Gastrocnemius medialis (tissue), 4 donors: ENCODE measurements at regions of chr19 and their contacts with region 1.

Region 1: GRCh38 chr19:10653715-10654492 is at the start of gene ILF3:
- DNase-seq: peak; percentile 100
- ATAC-seq: peak; percentile 86 to 90
- H3K4me3 ChIP-seq: peak within 1 kb of the TSS; percentile 85 to 99 (median 97)
- H3K27ac ChIP-seq: peak within 1 kb of the TSS; percentile 99 to 100 (median 99)
- H3K4me1 ChIP-seq: peaks cover 31 to 45% of the 10 kb centered on the region in 2 donors
- H3K27me3 ChIP-seq: no peaks in the 10 kb centered on the region
- CTCF ChIP-seq: peak in 2 of 5 experiments; percentile 68 to 82
- POLR2A ChIP-seq: peak; percentile 85 to 91
- total RNA-seq, gene ILF3: 67.3 to 88.2 (median 76.6) TPM

Region 2: DNA sequence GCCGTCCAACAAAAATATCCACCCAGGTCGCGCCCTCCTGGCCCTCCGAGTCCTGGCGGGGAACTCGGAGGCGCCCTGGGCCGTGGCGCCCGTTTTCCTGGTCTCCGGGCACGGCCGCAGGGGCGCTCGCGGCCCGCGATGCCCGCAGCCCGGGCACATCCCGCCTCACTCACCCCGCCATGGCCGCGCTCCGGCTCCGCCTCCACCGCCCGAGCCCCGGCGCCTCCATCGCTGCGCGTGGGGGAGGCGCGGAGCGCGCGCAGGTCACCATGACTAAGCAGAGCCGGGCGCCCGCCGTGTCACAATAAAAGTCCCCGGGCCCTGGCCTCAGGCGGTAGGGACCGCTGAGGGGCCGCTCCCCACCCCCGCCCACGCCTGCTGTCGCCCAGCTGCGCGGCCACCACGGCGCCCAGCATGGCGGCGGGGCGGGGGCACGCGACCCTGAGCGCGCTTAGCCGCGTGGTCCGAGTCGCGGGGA is 151.3 kb before region 1 on chr19:
- in situ Hi-C with region 1: no loop called
- intact Hi-C with region 1: loop called (anchors 2 kb)
- DNase-seq: peak; percentile 89 to 94
- ATAC-seq: peak; percentile 79 to 89
- H3K4me3 ChIP-seq: peak overlapping the region; percentile 77 to 96 (median 92)
- H3K27ac ChIP-seq: peak overlapping the region; percentile 96 to 100 (median 98)
- H3K4me1 ChIP-seq: peaks cover 30 to 39% of the 10 kb centered on the region in 2 donors
- H3K27me3 ChIP-seq: no peaks in the 10 kb centered on the region
- CTCF ChIP-seq: peak in 2 of 5 experiments; percentile 25 to 41
- POLR2A ChIP-seq: peak; percentile 82 to 84

Region 3: DNA sequence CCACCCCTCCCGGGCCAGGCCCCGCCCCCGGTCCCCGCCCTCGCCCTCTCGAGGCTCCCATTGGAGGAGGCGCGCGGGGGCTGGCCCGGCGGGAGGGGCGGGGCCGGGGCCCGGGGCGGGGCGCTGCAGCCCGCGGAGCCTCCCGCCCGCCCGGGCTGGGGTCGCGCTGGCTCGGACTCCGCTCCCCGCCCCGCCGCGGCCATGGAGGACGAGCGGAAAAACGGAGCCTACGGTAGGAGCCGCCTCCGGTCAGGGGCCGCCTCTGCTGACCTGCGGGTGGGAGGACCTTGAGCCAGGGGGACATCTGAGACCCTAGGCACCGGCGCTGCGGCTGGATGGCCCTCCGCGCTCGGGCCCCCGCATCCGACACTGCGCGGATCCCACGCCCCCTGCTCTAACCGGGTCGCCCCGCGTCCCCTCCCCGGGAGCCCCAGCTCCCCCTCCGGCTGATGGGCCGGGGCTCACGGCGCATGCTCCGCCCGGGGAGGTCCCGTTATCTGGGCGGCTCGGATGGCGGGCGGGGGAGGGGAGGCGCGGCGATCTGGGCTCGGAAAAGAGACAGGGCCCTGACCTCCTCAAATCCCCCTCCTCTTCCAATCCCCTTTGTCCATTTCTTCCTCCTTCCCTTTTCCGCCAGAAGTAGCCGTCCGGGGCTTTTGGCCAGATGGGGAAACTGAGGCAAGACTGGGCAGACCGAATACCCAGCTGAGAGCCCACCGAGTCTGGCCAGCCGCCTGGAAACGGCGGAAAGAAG is 51.4 kb before region 1 on chr19:
- in situ Hi-C with region 1: no loop called
- intact Hi-C with region 1: loop called (anchors 2 kb)
- DNase-seq: peak; percentile 67 to 83
- ATAC-seq: peak; percentile 94 to 95
- H3K4me3 ChIP-seq: peak overlapping the region; percentile 93 to 100 (median 98)
- H3K27ac ChIP-seq: peak overlapping the region; percentile 86 to 98 (median 94)
- H3K4me1 ChIP-seq: peaks cover 15 to 18% of the 10 kb centered on the region in 2 donors
- H3K27me3 ChIP-seq: no peaks in the 10 kb centered on the region
- CTCF ChIP-seq: no peak
- POLR2A ChIP-seq: peak; percentile 60 to 62

Region 4: DNA sequence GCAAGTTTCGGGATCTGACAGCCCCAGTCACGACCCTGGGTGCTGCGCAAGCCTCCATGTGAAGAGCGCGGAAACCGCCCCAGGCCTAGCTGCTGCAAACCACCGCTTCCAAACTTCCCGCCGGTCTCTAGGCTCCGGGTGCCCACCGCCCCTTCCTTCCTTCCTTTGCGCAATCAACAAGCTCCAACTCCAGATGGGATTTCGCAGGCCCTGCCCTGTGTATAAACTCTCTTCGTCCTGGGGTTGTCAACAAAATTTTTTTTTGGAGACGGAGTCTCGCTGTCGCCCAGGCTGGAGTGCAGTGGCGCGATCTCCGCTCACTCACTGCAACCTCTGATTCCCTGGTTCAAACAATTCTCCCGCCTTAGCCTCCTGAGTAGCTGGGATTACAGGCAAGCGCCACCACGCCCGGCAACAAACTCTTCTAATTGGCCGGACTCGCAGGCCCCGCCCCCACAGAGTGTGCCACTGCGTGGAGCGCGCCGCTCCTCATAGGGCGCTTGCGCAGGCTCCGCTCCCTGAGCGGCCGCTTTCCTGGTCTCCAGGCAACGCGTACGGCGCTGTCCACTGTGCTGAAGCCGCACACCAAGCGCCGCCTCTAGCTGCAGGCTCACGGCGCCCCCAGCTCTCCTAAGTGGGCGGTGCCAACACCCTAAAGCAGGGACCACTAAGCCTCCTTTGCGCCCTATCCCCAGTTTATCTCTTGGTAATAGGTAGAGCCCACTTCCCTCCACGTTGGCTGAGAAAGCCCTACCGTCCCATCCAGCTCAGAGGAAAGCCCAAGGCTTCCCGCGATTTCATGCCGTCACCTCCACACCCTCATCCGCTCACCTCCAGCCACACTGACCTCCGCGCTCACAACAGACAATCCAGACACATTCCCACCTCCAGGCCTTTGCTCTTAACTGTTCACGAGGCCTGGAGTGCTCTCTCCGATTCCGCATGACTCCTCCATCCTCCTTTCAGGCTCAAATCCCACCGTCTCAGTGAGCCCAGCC is 41.8 kb after region 1 on chr19:
- in situ Hi-C with region 1: loop called in 1 of 4 experiments (anchors 5 kb)
- intact Hi-C with region 1: no loop called
- DNase-seq: peak; percentile 75 to 88
- ATAC-seq: peak; percentile 91 to 92
- H3K4me3 ChIP-seq: peak overlapping the region in 3 of 4 donors; percentile 20 to 38 (median 33)
- H3K27ac ChIP-seq: no peak overlapping the region
- H3K4me1 ChIP-seq: peaks cover 10 to 12% of the 10 kb centered on the region in 2 donors
- H3K27me3 ChIP-seq: no peaks in the 10 kb centered on the region
- CTCF ChIP-seq: no peak
- POLR2A ChIP-seq: no peak

Region 5: DNA sequence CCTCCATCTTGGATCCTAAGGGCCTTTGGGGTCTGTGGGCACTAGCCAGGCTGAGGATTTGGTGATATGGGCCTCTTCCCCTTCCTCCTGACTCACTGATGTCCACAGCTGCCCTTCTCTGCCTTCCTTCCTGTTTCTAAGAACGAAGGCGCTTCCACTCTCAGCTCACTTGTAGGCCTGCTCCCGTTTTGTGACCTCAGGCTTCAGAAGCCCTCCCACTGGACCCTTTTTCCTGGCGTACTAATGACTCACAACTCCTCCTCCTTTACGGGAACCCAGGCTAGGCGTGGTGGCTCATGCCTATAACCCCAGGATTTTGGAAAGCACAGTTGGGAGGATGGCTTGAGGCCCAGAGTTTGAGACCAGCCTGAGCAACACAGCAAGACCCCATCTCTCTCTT is 126.5 kb after region 1 on chr19:
- in situ Hi-C with region 1: no loop called
- intact Hi-C with region 1: no loop called
- DNase-seq: peak; percentile 29 to 56
- ATAC-seq: peak; percentile 74 to 76
- H3K4me3 ChIP-seq: no peak overlapping the region
- H3K27ac ChIP-seq: peak overlapping the region; percentile 54 to 72 (median 58)
- H3K4me1 ChIP-seq: peaks cover 4 to 7% of the 10 kb centered on the region in 2 donors
- H3K27me3 ChIP-seq: no peaks in the 10 kb centered on the region
- CTCF ChIP-seq: no peak
- POLR2A ChIP-seq: peak; percentile 9 to 33

Region 6: GRCh38 chr19:10899151-10899653 is 245.3 kb after region 1 on chr19:
- in situ Hi-C with region 1: no loop called
- intact Hi-C with region 1: no loop called
- DNase-seq: peak; percentile 68 to 92
- ATAC-seq: peak; percentile 50 to 74
- H3K4me3 ChIP-seq: no peak overlapping the region
- H3K27ac ChIP-seq: peak overlapping the region; percentile 84 to 95 (median 90)
- H3K4me1 ChIP-seq: peaks cover 71 to 74% of the 10 kb centered on the region in 2 donors
- H3K27me3 ChIP-seq: no peaks in the 10 kb centered on the region
- CTCF ChIP-seq: no peak
- POLR2A ChIP-seq: no peak

Region 7: GRCh38 chr19:10960314-10961072 is 306.6 kb after region 1 on chr19 and contains the start of gene SMARCA4:
- in situ Hi-C with region 1: no loop called
- intact Hi-C with region 1: loop called (anchors 1 kb)
- DNase-seq: peak; percentile 93 to 97
- ATAC-seq: peak; percentile 91 to 93
- H3K4me3 ChIP-seq: peak within 1 kb of the TSS; percentile 72 to 91 (median 86)
- H3K27ac ChIP-seq: peak within 1 kb of the TSS; percentile 88 to 99 (median 95)
- H3K4me1 ChIP-seq: peaks cover 23 to 24% of the 10 kb centered on the region in 2 donors
- H3K27me3 ChIP-seq: no peaks in the 10 kb centered on the region
- CTCF ChIP-seq: no peak
- POLR2A ChIP-seq: peak; percentile 96 to 97
- total RNA-seq, gene SMARCA4: 24.0 to 72.6 (median 68.7) TPM